Left cardiac atrium (tissue), 4 donors: ENCODE measurements at regions of chr11 and their contacts with region 1.

Region 1: DNA sequence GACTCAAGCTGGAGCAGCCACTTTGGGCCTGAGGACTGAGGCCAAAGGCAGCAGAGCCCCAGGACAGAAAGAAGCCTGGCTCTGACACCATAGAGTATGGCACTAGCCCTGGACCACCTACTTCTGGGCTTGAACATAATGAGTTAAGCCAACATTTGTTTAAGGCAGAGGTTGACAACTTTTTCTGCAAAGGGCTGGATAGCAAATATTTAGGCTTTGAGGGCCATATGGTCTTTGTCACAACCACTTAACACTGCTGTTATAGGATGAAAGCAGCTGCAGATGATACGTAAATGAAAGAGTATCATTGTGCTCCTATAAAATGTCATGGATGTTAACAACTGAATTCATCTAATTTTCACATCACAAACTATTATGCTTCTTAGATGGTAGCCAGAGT is 16.6 kb downstream of the OSBP start:
- DNase-seq: no peak
- ATAC-seq: no peak

Region 2: DNA sequence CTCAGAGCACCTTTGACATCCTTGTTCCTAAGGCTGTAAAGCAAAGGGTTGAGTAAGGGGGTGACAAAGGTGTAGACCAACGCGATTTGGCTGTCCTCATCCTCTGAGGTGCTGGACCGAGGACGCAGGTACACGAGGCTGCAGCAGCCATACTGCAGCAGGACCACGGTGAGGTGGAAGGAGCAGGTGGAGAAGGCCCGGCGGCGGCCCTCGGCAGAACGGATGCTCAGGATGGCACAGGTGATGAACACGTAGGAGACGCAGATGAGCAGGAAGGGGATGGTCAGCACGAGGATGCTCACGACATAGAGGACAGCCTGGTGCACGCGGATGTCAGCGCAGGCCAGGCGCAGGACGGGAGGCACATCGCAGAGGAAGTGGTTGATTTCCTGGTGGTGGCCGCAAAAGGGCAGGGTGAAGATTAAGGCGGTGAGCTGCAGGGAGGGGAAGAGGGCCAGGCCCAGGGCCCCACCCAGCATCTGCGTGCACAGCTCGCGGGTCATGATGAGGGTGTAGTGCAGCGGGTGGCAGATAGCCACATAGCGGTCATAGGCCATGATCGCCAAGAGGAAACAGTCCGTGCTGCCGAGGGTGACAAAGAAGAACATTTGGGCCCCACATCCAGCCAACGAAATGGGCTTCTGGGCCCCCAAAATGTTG is 1370.9 kb before region 1 on chr11:
- intact Hi-C with region 1: no loop called
- DNase-seq: no peak
- ATAC-seq: no peak

Region 3: DNA sequence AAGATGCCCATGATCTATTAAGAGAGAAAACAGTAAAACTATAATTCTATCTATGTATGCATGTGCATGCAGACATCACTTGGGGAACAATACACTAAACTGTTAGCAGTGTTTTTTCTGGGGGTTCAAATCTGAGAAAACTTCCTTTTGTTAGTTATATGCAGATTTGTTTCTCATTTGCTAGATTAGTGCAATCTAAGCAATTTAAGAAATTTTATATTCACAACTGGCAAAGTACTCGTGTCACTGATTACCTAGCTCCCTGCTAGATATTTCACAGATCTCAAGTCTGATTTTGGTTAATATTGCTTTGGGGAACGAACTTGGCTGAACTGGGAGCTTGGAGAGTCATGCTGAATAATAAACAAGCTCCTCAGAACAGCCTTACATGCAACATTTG is 31.5 kb after region 1 on chr11:
- intact Hi-C with region 1: no loop called
- DNase-seq: no peak
- ATAC-seq: no peak

Region 4: GRCh38 chr11:59654893-59655292 is 55.9 kb after region 1 on chr11:
- intact Hi-C with region 1: loop called (anchors 5 to 10 kb)
- DNase-seq: no peak
- ATAC-seq: no peak

Region 5: GRCh38 chr11:59659981-59660380 is 61.0 kb after region 1 on chr11:
- intact Hi-C with region 1: loop called in 1 of 2 experiments (anchors 10 kb)
- DNase-seq: no peak
- ATAC-seq: no peak